Heart left ventricle (tissue), 16 donors: ENCODE measurements at regions of chr12 and their contacts with region 1.

Region 1: DNA sequence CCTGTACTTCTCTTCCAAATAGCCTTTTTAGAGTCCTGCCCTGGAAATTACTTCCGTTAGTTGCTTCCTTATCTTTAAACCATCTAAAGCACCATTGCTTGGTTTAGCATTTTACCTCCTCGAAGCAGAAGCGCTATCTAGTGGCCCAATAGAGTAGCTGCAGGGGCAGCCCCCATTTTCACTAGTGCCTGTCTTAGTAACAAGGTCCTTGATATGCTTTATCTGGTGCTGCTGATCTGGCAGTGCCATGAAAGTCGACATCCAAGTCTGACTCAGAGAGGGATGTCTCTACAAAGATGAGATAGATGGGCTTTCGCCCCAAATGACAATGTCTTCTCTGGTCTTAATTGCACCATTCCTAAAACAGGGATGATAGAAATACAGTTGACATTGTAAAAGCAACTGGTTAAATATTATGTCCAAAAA is 25.0 kb upstream of the CIT start:
- DNase-seq: peak in 1 of 5 donors; percentile 50
- ATAC-seq: peak in 1 of 4 donors; percentile 34
- H3K4me3 ChIP-seq: no peak overlapping the region
- H3K27ac ChIP-seq: no peak overlapping the region
- H3K4me1 ChIP-seq: peaks cover 0 to 6% (median 0%) of the 10 kb centered on the region in 12 donors
- H3K27me3 ChIP-seq: peaks cover 0 to 6% (median 0%) of the 10 kb centered on the region in 9 donors
- CTCF ChIP-seq: peak; percentile 55 to 84 (median 72)
- POLR2A ChIP-seq: no peak

Region 2: DNA sequence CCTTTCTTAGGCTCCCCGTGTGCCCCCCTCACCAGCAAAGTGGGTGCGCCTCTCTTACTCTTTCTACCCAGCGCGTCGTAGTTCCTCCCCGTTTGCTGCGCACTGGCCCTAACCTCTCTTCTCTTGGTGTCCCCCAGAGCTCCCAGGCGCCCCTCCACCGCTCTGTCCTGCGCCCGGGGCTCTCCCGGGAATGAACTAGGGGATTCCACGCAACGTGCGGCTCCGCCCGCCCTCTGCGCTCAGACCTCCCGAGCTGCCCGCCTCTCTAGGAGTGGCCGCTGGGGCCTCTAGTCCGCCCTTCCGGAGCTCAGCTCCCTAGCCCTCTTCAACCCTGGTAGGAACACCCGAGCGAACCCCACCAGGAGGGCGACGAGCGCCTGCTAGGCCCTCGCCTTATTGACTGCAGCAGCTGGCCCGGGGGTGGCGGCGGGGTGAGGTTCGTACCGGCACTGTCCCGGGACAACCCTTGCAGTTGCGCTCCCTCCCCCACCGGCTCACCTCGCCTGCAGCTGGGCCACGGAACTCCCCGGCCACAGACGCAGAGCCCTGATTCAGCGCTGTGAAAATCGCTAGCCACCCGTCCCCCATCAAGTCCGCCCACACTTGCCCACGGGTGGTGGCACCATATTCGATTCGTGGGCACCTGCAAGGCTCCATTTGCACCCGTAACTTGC is 307.2 kb before region 1 on chr12:
- intact Hi-C with region 1: no loop called
- DNase-seq: peak in 4 of 5 donors; percentile 33 to 57 (median 44)
- ATAC-seq: peak; percentile 48 to 86 (median 78)
- H3K4me3 ChIP-seq: peak overlapping the region; percentile 11 to 69 (median 56)
- H3K27ac ChIP-seq: peak overlapping the region in 11 of 12 donors; percentile 18 to 85 (median 58)
- H3K4me1 ChIP-seq: peaks cover 0 to 20% (median 10%) of the 10 kb centered on the region in 12 donors
- H3K27me3 ChIP-seq: peaks cover 0 to 55% (median 22%) of the 10 kb centered on the region in 9 donors
- CTCF ChIP-seq: no peak
- POLR2A ChIP-seq: no peak

Region 3: DNA sequence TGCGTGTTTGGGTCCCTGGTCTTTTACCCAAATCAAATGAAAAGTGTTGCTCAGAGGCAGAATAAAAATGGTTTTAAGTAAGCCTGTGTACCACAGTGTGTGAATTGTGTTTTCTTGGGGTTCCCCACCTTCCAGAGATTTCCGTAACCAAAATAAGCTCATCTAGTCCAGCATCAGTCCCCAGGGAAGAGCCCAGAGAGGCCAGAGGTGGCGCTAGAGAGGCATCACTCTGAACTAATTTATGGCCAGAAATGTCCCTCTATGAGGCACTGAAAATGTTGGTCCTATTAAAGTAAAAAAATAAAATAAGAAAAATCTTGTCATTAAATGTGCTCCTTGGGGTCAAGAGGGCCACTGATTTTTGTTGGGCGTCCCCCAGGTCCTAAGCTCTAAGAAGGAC is 259.1 kb before region 1 on chr12:
- intact Hi-C with region 1: no loop called
- DNase-seq: no peak
- ATAC-seq: no peak
- H3K4me3 ChIP-seq: no peak overlapping the region
- H3K27ac ChIP-seq: no peak overlapping the region
- H3K4me1 ChIP-seq: no peaks in the 10 kb centered on the region
- H3K27me3 ChIP-seq: no peaks in the 10 kb centered on the region
- CTCF ChIP-seq: peak in 4 of 12 donors; percentile 10 to 17 (median 12)
- POLR2A ChIP-seq: no peak

Region 4: GRCh38 chr12:119659289-119659897 is 242.7 kb before region 1 on chr12:
- intact Hi-C with region 1: loop called in 2 of 10 experiments (anchors 10 kb)
- DNase-seq: no peak
- ATAC-seq: no peak
- H3K4me3 ChIP-seq: no peak overlapping the region
- H3K27ac ChIP-seq: no peak overlapping the region
- H3K4me1 ChIP-seq: no peaks in the 10 kb centered on the region
- H3K27me3 ChIP-seq: no peaks in the 10 kb centered on the region
- CTCF ChIP-seq: peak; percentile 85 to 98 (median 90)
- POLR2A ChIP-seq: no peak

Region 5: DNA sequence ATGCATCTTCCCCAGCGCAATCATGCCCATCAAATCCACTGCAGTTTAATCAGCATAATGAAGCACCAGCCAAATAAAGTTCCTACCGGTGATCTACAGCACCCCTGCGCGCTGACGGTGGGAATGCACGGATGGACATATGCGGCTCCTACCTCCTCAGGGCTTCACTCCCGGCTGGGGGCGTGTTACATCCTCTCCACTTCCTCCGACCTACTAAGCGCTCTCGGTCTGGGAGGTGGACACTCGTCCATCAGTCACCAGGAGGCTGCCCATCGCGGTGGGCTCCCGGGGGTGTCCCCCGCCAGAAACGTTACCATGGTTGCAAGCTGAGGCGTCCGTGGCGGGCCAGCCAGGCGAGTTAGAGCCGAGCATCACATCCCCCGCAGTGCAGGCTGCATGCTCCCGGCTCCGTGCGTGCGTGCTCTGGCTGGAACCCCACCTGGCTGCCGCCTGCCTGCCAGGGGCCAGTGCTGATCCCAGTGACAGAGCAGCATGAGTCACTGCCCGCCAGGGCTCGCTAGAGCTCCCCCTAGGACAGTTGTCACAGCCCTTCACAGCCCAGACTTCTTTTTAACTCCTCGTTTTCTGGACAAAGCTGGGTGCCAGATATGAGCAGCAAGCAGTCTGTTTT is 98.0 kb before region 1 on chr12:
- intact Hi-C with region 1: loop called in 1 of 10 experiments (anchors 10 kb)
- DNase-seq: peak; percentile 29 to 74 (median 61)
- ATAC-seq: peak; percentile 71 to 97 (median 96)
- H3K4me3 ChIP-seq: peak overlapping the region in 8 of 12 donors; percentile 15 to 53 (median 39)
- H3K27ac ChIP-seq: no peak overlapping the region
- H3K4me1 ChIP-seq: peaks cover 0 to 22% (median 10%) of the 10 kb centered on the region in 12 donors
- H3K27me3 ChIP-seq: no peaks in the 10 kb centered on the region
- CTCF ChIP-seq: peak in 11 of 12 donors; percentile 14 to 64 (median 40)
- POLR2A ChIP-seq: no peak

Region 6: DNA sequence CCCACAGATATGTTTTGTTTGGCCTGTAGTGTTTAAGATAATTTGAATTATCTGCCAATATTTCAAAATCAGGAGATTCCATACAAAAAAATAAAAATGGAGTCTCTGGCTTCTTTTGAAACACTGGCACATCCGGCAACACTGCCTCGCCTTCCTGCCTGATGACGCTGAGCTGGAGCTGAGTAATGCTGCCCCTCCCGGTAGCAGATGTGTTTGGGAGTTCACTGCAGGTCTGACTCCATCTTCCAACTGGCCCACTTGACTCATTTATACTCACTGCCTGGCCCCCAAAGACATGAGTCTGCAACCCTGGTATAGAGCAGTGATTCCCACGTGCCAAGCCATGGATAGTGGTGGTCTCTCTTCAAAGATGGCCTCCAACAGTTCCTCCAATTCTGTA is 32.4 kb before region 1 on chr12:
- intact Hi-C with region 1: no loop called
- DNase-seq: no peak
- ATAC-seq: peak in 3 of 4 donors; percentile 53 to 74 (median 68)
- H3K4me3 ChIP-seq: no peak overlapping the region
- H3K27ac ChIP-seq: no peak overlapping the region
- H3K4me1 ChIP-seq: no peaks in the 10 kb centered on the region
- H3K27me3 ChIP-seq: no peaks in the 10 kb centered on the region
- CTCF ChIP-seq: no peak
- POLR2A ChIP-seq: no peak